Ascending aorta (tissue), 2 donors: ENCODE measurements at regions of chr2 and their contacts with region 1.

Region 1: DNA sequence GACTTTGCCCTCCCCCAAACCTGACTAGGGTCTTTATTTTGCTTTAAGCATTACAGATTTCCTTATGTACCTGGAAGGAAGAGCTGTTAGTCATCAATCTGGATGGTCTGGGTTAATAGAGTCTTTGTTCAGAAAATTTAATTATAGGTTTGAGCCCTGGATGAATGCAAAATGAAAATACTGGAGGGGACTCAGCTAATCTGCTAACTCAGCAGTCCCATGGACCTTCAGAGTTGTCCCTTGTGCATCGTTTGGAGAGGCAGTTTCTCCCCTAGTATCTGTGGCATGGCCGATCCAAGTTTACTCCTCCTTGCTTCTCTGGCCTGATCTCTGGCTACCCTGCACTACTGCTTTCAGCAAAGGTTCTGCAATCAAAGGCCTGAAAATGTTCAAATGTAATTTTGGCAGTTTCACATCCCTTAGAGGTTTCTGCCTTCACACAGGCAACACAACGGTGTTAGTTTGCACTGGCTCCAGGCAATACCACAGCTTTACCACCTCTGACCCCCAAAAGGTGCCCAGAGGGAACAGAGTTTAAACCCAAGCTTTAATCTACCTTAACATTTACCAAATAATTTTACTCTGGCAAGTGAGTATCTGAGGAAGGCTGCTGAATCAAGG is 134.3 kb downstream of the THADA start:
- DNase-seq: no peak
- H3K4me3 ChIP-seq: no peak overlapping the region
- H3K27ac ChIP-seq: peak overlapping the region; percentile 67 to 68
- H3K4me1 ChIP-seq: peaks cover 7 to 75% of the 10 kb centered on the region in 2 donors
- H3K27me3 ChIP-seq: no peaks in the 10 kb centered on the region
- CTCF ChIP-seq: no peak

Region 2: DNA sequence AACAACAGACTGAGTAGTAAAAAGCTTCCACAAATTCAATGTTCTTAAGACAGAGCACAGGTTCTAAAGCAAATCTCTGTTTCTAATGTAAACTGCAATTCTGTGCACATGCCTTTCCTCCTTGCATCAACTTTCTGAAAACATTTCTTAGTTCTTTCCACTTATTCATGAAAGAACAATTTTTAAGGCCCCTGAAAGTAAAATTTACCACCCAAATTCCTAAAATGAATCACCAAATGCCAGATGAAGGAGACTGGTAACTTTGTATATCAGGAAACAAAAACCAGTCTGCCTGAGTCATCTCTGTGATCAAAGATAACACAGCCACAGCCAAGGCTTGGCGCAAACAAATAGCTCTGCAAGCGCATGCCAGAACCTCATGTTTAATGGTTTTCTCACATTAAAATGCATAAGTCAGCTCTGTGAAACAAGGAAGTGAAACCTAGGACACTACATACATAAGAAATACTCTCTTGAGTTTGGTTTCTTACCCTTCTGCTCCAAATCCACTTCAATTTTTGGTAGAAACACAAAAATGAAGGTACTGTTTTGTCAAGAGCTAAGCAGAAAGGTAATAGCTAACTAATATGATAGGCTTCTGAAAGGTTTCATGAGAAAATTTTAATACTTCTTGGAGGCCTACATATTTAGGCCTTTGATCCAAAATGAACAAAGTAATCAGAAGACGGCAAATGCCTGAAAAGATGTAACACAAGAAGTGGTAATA is 35.1 kb before region 1 on chr2:
- intact Hi-C with region 1: loop called (anchors 5 kb)
- DNase-seq: peak in 1 of 2 donors; percentile 87
- H3K4me3 ChIP-seq: no peak overlapping the region
- H3K27ac ChIP-seq: peak overlapping the region; percentile 35 to 65
- H3K4me1 ChIP-seq: peaks cover 9 to 34% of the 10 kb centered on the region in 2 donors
- H3K27me3 ChIP-seq: no peaks in the 10 kb centered on the region
- CTCF ChIP-seq: no peak

Region 3: DNA sequence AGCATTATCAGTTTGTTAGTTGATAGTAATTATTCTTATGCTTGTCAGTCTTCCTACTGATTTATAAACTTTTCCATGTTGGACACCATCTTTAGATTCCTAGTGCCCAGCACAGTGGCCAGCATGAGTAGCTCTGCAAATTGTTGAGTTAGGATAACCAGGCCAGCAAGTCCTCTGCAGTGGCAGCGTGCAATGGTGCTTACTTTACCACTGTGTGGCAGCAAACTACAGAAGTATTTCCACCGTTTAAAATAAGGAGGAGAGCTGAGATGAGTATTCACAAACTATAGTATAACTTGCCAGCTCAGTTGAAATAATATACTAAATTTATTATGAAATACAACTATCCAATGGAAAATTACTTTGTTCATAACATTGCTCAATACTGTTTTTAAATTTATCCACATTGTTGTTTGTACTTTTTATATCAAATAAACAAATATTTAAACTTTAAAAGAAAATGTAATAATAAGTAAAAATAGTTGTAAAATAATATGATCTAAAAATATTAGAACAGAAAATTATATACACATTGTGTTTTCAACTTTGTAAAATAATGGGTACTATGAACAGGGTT is 143.6 kb after region 1 on chr2:
- intact Hi-C with region 1: no loop called
- DNase-seq: no peak
- H3K4me3 ChIP-seq: no peak overlapping the region
- H3K27ac ChIP-seq: no peak overlapping the region
- H3K4me1 ChIP-seq: no peaks in the 10 kb centered on the region
- H3K27me3 ChIP-seq: no peaks in the 10 kb centered on the region
- CTCF ChIP-seq: peak in 2 of 3 experiments; percentile 38 to 39